Activated naive CD4-positive, alpha-beta T cell treated with anti-CD3 and anti-CD28 coated beads for 36 hours (primary cell): ENCODE measurements at regions of chr2 and their contacts with region 1.

Region 1: DNA sequence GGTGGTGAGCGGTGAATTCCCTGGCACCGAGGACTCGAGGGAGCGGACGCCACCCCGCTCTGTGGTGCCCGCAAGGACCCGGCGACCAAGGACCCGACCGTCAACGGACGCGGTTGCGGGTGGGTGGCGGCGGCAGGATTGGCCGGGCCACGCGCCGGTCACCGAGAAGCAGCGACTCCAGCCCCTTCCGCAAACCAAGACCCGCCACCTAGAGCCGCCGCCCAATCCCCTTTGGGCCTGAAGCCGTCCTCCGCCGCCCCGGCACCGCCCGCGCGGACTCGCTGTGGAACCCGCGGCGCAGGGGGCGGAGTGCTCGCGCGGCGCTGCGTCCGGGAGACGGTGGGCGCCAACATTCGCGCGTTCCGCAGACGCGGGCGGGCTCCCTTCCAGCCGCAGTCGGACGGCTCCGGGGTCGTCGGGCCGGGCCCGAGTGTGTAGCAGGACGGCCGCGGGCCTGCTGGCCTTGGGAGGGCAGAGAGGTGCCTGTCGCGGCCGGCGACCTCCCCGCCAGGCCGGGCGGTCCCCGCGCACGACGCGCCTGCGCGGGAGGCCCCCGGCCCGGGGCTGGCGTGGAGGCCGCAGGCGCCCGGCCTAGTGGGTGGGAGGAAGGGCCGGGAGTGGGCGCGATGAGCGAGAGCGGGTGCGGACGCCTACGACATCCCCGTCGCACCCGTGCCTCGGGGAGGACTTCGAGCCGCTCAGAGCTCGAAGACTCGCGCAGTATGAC is at the starts of genes FAM228B and PFN4:
- DNase-seq: peak; percentile 83
- H3K4me3 Mint-ChIP-seq: peak within 1 kb of the TSS; percentile 75
- H3K27ac Mint-ChIP-seq: peak within 1 kb of the TSS; percentile 8
- H3K4me1 Mint-ChIP-seq: peaks cover 5% of the 10 kb centered on the region
- H3K27me3 Mint-ChIP-seq: peaks cover 5% of the 10 kb centered on the region
- total RNA-seq, gene FAM228B: 3.6 to 4.1 TPM
- total RNA-seq, gene PFN4: 0.32 TPM in 1 of 2 experiments, not detected in the other

Region 2: GRCh38 chr2:23939987-23940717 is 183.2 kb before region 1 on chr2 and contains the start of gene UBXN2A:
- CTCF ChIA-PET with region 1: no interaction called
- intact Hi-C with region 1: loop called (anchors 5 kb)
- DNase-seq: peak; percentile 71
- H3K4me3 Mint-ChIP-seq: peak within 1 kb of the TSS; percentile 88
- H3K27ac Mint-ChIP-seq: peak within 1 kb of the TSS; percentile 84
- H3K4me1 Mint-ChIP-seq: peaks cover 15% of the 10 kb centered on the region
- H3K27me3 Mint-ChIP-seq: peaks cover 8% of the 10 kb centered on the region
- total RNA-seq, gene UBXN2A: 7.6 to 7.7 TPM